ENCODE measurements at regions of chr11 and their contacts with region 1.

Region 1: DNA sequence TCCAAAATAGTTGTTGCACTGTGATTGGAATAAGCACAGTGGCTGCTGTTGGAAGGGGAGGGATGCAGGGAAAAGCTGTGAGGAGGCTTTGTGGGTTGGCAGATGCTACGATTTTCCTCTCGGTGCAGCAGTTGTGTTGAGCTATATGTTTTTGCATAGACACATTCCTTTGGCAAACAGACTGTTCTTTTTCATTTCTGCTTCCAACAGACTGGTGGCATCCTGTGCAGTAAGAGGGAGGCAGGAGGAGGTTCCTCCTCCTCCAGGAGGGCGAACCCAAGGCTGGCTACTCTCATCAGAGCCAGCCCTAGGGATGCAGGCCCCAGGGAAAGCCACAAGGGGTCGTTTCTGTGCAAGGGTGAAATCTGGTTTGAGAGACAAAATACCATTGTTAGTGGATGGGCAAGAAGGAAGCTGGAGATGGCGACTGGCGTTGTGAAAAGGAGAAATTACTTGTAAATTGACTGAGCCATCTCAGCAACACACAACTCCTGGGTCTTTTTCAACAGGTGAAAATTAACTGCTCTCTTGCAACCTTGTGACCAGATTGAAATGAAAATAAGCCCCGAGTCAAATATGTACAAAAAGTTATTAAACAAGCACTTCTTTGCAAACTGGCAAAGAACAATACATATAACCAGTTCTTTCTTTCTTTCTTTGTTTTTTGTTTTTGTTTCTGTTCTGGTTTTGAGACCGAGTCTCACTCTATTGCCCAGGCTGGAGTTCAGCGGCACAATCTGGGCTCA is 26.5 kb upstream of the UBASH3B start:
- DNase-seq: peak; percentile 39 to 76 (median 42)
- H3K4me3 ChIP-seq: no peak overlapping the region
- H3K4me3 Mint-ChIP-seq: peak overlapping the region in 1 of 7 donors; percentile 15
- H3K27ac ChIP-seq: no peak overlapping the region
- H3K27ac Mint-ChIP-seq: peak overlapping the region in 1 of 8 donors; percentile 41
- H3K4me1 ChIP-seq: no peaks in the 10 kb centered on the region
- H3K4me1 Mint-ChIP-seq: peaks cover 5 to 12% (median 7%) of the 10 kb centered on the region in 3 donors
- H3K27me3 ChIP-seq: no peaks in the 10 kb centered on the region
- H3K27me3 Mint-ChIP-seq: peaks cover 0 to 6% of the 10 kb centered on the region in 2 donors

Region 2: GRCh38 chr11:122749005-122749687 is 120.2 kb after region 1 on chr11:
- CTCF ChIA-PET with region 1: interaction called, 199 read pairs
- POLR2A ChIA-PET with region 1: no interaction called
- DNase-seq: peak in 1 of 5 donors; percentile 66
- H3K4me3 ChIP-seq: no peak overlapping the region
- H3K4me3 Mint-ChIP-seq: peak overlapping the region in 4 of 7 donors; percentile 35 to 58 (median 44)
- H3K27ac ChIP-seq: no peak overlapping the region
- H3K27ac Mint-ChIP-seq: peak overlapping the region in 2 of 8 donors; percentile 15 to 55
- H3K4me1 ChIP-seq: peaks cover 67% of the 10 kb centered on the region
- H3K4me1 Mint-ChIP-seq: peaks cover 18 to 32% (median 25%) of the 10 kb centered on the region in 3 donors
- H3K27me3 ChIP-seq: no peaks in the 10 kb centered on the region
- H3K27me3 Mint-ChIP-seq: no peaks in the 10 kb centered on the region

Region 3: GRCh38 chr11:122765487-122766131 is 136.6 kb after region 1 on chr11:
- CTCF ChIA-PET with region 1: interaction called, 199 read pairs
- POLR2A ChIA-PET with region 1: no interaction called
- DNase-seq: no peak
- H3K4me3 ChIP-seq: no peak overlapping the region
- H3K4me3 Mint-ChIP-seq: no peak overlapping the region
- H3K27ac ChIP-seq: no peak overlapping the region
- H3K27ac Mint-ChIP-seq: peak overlapping the region in 1 of 8 donors; percentile 42
- H3K4me1 ChIP-seq: no peaks in the 10 kb centered on the region
- H3K4me1 Mint-ChIP-seq: peaks cover 9 to 14% (median 9%) of the 10 kb centered on the region in 3 donors
- H3K27me3 ChIP-seq: no peaks in the 10 kb centered on the region
- H3K27me3 Mint-ChIP-seq: no peaks in the 10 kb centered on the region

Measured in CD8-positive, alpha-beta memory T cell (primary cell).